Right ventricle myocardium inferior (tissue), 1 donor: ENCODE measurements at regions of chr1 and their contacts with region 1.

Region 1: GRCh38 chr1:241847796-241848685 is at the start of gene EXO1:
- DNase-seq: peak; percentile 94
- ATAC-seq: peak; percentile 98
- total RNA-seq, gene EXO1: 0.65 TPM

Region 2: GRCh38 chr1:241531195-241532161 is 316.6 kb before region 1 on chr1:
- intact Hi-C with region 1: loop called (anchors 5 kb)
- DNase-seq: no peak
- ATAC-seq: peak; percentile 76

Region 3: GRCh38 chr1:242147096-242147976 is 299.3 kb after region 1 on chr1:
- intact Hi-C with region 1: no loop called
- DNase-seq: no peak
- ATAC-seq: no peak